HepG2 (cell line): ENCODE measurements at regions of chr9 and their contacts with region 1.

Region 1: DNA sequence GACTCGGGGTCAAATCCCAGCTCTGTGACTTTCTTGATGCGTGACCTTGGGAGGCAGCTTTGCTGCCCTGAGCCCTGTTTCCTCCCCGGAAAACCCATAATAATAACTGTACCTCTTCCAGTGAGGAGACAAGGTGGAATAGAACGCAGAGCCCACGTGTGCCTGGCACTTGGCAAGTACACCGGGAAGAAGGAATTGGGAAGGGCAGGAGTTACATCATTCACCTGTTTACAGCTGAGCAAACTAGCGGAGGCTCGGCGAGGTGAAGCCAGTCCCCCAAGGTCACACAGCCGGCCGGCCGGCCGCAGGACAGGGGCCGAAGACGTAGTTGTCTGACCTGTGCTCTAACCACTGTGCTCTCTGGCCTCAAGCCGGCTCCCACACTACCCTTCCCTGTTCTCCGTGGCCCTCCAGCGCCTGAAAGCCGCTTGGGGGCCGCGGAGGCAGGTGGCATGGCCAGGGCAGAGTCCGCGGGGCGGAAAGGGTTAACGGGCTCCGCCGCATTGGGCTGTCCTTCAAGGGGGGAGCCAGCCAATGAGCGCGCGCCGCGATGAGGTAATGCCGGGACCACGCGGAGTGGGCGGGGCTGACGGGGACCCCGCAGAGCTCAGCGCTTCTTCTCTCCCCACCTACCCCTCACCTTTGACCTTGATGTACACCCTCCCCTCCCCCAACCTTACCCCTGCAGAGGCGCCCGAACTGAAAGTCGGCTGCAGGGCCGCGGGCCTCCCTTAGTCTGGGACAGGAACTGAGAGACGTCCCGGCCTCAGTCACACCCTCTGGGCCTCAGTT is 125.2 kb downstream of the C9orf50 start:
- DNase-seq: peak; percentile 86
- ATAC-seq: peak; percentile 75
- H3K4me3 ChIP-seq: peak overlapping the region; percentile 56 to 79 (median 61)
- H3K27ac ChIP-seq: peak overlapping the region; percentile 92
- H3K4me1 ChIP-seq: peaks cover 79% of the 10 kb centered on the region
- H3K27me3 ChIP-seq: no peaks in the 10 kb centered on the region
- CTCF ChIP-seq: peak; percentile 50
- EP300 ChIP-seq: no peak
- POLR2A ChIP-seq: no peak; a peak in 1 of 4 replicates
- RAD21 ChIP-seq: peak; percentile 30; the same call in 1 of the 2 replicates

Region 2: DNA sequence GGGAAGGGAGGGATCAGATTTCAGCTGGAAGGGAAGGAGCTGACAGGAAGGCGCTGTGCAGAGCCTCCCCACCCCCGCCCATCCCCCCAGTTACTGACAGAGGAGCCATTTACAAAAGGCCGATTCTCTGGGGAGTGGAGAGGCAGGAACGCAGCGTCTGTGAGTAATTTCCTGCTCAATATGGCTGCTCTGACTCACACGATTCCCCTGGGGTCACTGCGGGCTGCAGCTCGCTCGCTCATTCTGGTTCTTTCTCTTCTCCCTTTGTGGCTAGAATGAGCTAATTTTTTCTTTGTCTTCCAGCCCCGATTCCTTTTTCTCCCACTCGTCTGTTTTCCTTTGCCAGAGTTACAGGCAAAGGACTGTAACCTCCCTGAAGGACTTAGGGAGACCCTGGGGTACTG is 355.7 kb before region 1 on chr9:
- CTCF ChIA-PET with region 1: no interaction called
- POLR2A ChIA-PET with region 1: interaction called, 23 read pairs
- in situ Hi-C with region 1: no loop called
- intact Hi-C with region 1: no loop called
- DNase-seq: peak; percentile 94
- ATAC-seq: peak; percentile 81
- H3K4me3 ChIP-seq: peak overlapping the region; percentile 57 to 75 (median 67)
- H3K27ac ChIP-seq: peak overlapping the region; percentile 98
- H3K4me1 ChIP-seq: peaks cover 51% of the 10 kb centered on the region
- H3K27me3 ChIP-seq: no peaks in the 10 kb centered on the region
- CTCF ChIP-seq: no peak
- EP300 ChIP-seq: peak in 1 of 2 experiments; percentile 63; a peak in 2 of 4 replicates
- POLR2A ChIP-seq: peak; percentile 75 to 78
- RAD21 ChIP-seq: no peak

Region 3: GRCh38 chr9:129343424-129344375 is 152.0 kb before region 1 on chr9:
- CTCF ChIA-PET with region 1: no interaction called
- POLR2A ChIA-PET with region 1: interaction called, 15 read pairs
- in situ Hi-C with region 1: no loop called
- intact Hi-C with region 1: no loop called
- DNase-seq: peak; percentile 97
- ATAC-seq: peak; percentile 99
- H3K4me3 ChIP-seq: peak overlapping the region in 2 of 3 experiments; percentile 22 to 47; a peak in 3 of 6 replicates
- H3K27ac ChIP-seq: peak overlapping the region; percentile 91
- H3K4me1 ChIP-seq: peaks cover 86% of the 10 kb centered on the region
- H3K27me3 ChIP-seq: no peaks in the 10 kb centered on the region
- CTCF ChIP-seq: peak; percentile 67
- EP300 ChIP-seq: peak; percentile 52 to 94; a peak in 3 of 4 replicates
- POLR2A ChIP-seq: peak in 1 of 2 experiments; percentile 70; a peak in 1 of 4 replicates
- RAD21 ChIP-seq: peak; percentile 64; the same call in 1 of the 2 replicates

Region 4: GRCh38 chr9:129482521-129483414 is 13.0 kb before region 1 on chr9:
- CTCF ChIA-PET with region 1: no interaction called
- POLR2A ChIA-PET with region 1: interaction called, 19 read pairs
- in situ Hi-C with region 1: no loop called
- intact Hi-C with region 1: no loop called
- DNase-seq: no peak
- ATAC-seq: no peak
- H3K4me3 ChIP-seq: no peak overlapping the region; a peak in 1 of 6 replicates
- H3K27ac ChIP-seq: no peak overlapping the region
- H3K4me1 ChIP-seq: peaks cover 82% of the 10 kb centered on the region
- H3K27me3 ChIP-seq: no peaks in the 10 kb centered on the region
- CTCF ChIP-seq: no peak
- EP300 ChIP-seq: no peak
- POLR2A ChIP-seq: no peak
- RAD21 ChIP-seq: no peak

Region 5: GRCh38 chr9:129569502-129570449 is 74.0 kb after region 1 on chr9:
- CTCF ChIA-PET with region 1: no interaction called
- POLR2A ChIA-PET with region 1: interaction called, 58 read pairs
- in situ Hi-C with region 1: no loop called
- intact Hi-C with region 1: loop called (anchors 2 kb)
- DNase-seq: peak; percentile 56
- ATAC-seq: peak; percentile 42
- H3K4me3 ChIP-seq: peak overlapping the region; percentile 38 to 61 (median 50)
- H3K27ac ChIP-seq: peak overlapping the region; percentile 80
- H3K4me1 ChIP-seq: peaks cover 70% of the 10 kb centered on the region
- H3K27me3 ChIP-seq: no peaks in the 10 kb centered on the region; a peak in 1 of 5 replicates
- CTCF ChIP-seq: peak; percentile 75
- EP300 ChIP-seq: no peak
- POLR2A ChIP-seq: no peak
- RAD21 ChIP-seq: peak; percentile 73

Region 6: DNA sequence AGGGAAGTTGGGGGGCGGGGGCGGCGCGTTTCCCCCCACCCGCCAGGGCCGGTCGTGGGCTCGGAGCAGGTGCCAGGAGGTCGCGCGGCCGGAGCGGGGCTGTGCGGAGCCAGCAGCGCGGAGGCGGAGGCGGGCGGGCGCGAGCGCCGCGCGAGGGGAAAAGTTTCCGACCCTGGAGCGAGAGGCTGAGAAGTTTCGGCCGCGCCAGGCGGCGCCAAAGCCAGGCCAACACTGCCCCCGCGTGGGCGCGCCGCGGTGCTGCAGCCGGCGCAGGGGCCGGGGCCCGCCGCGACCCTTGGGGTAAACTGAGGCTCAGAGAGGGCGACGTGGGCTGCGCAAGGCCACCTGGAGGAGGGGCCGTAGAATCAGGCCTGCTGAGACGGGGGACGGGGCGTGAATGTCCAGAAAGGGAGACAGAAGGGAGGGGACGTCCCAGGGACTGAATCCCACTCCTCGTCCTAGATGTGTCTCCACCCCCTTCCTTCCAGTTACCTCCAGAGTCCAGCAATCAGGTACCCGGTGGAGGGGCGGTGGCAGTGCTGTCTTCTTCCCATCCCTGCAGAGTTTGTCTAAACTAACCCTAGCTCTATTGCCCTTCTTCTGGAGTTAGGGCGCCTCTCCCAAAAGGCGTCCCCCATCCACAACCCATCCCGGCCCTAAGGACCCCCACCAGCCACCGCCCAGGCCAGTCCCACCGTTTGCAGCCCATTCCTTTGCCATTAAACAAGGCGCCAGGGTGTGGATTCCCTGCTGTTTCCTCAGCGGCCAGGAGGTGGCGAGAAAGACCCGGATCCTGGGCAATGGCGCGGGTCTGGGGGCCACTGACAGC is 115.0 kb after region 1 on chr9:
- CTCF ChIA-PET with region 1: no interaction called
- POLR2A ChIA-PET with region 1: interaction called, 31 read pairs
- in situ Hi-C with region 1: loop called (anchors 10 kb)
- intact Hi-C with region 1: no loop called
- DNase-seq: peak; percentile 48
- ATAC-seq: peak; percentile 57
- H3K4me3 ChIP-seq: peak overlapping the region; percentile 69 to 87 (median 81)
- H3K27ac ChIP-seq: peak overlapping the region; percentile 58
- H3K4me1 ChIP-seq: peaks cover 62% of the 10 kb centered on the region
- H3K27me3 ChIP-seq: no peaks in the 10 kb centered on the region
- CTCF ChIP-seq: peak; percentile 81
- EP300 ChIP-seq: no peak
- POLR2A ChIP-seq: no peak
- RAD21 ChIP-seq: peak; percentile 100